Activated T-helper 1 cell treated with anti-CD3 and anti-CD28 coated beads, Interleukin-12 subunit alpha, Interleukin-12 subunit beta, Interleukin-2, Interleukin-4 antibody, amounts not matched to agents 30 ng/mL and 10 ng/mL and 1 ng/mL, durations not matched to agents 14 hours and 24 hours and 36 hours (primary cell): ENCODE measurements at regions of chr7 and their contacts with region 1.

Region 1: GRCh38 chr7:105268511-105269392 is 120.0 kb downstream of the SRPK2 start:
- DNase-seq: no peak
- H3K4me3 Mint-ChIP-seq: peak overlapping the region; percentile 72
- H3K27ac Mint-ChIP-seq: peak overlapping the region; percentile 57
- H3K4me1 Mint-ChIP-seq: peaks cover 26% of the 10 kb centered on the region
- H3K27me3 Mint-ChIP-seq: no peaks in the 10 kb centered on the region

Region 2: GRCh38 chr7:105289704-105290103 is 21.0 kb after region 1 on chr7:
- intact Hi-C with region 1: loop called (anchors 1 kb)
- DNase-seq: no peak
- H3K4me3 Mint-ChIP-seq: no peak overlapping the region
- H3K27ac Mint-ChIP-seq: peak overlapping the region; percentile 30
- H3K4me1 Mint-ChIP-seq: peaks cover 13% of the 10 kb centered on the region
- H3K27me3 Mint-ChIP-seq: no peaks in the 10 kb centered on the region

Region 3: GRCh38 chr7:105309235-105310169 is 40.8 kb after region 1 on chr7:
- intact Hi-C with region 1: loop called (anchors 5 kb)
- DNase-seq: no peak
- H3K4me3 Mint-ChIP-seq: no peak overlapping the region
- H3K27ac Mint-ChIP-seq: peak overlapping the region; percentile 11
- H3K4me1 Mint-ChIP-seq: peaks cover 50% of the 10 kb centered on the region
- H3K27me3 Mint-ChIP-seq: no peaks in the 10 kb centered on the region

Region 4: GRCh38 chr7:105352018-105352612 is 83.4 kb after region 1 on chr7:
- intact Hi-C with region 1: loop called (anchors 2 kb)
- DNase-seq: peak; percentile 50
- H3K4me3 Mint-ChIP-seq: peak overlapping the region; percentile 52
- H3K27ac Mint-ChIP-seq: peak overlapping the region; percentile 87
- H3K4me1 Mint-ChIP-seq: peaks cover 46% of the 10 kb centered on the region
- H3K27me3 Mint-ChIP-seq: no peaks in the 10 kb centered on the region